Activated CD4-positive, alpha-beta T cell treated with anti-CD3 and anti-CD28 coated beads for 36 hours (primary cell): ENCODE measurements at regions of chr10 and their contacts with region 1.

Region 1: DNA sequence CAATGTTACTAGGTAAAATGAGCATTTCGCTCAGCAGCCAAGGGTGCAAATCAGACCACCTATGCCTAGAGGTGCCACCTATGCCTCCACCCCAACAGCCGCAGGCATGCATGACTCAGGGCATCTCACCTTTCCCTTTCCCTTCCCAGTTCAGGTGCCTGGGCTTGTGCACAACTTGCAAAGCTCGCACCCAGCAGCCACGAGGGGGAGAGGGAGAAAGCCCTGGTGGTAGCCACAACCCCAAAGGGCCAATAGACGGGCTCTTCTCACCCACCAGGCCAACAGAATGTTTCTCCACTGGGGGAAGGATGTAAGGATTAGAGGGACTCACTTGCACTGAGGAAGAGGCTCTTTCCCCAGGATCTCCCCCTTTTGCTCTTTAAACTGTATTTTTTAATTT is 462.3 kb upstream of the PCDH15 start:
- DNase-seq: no peak
- ATAC-seq: no peak
- H3K4me3 Mint-ChIP-seq: no peak overlapping the region
- H3K27ac Mint-ChIP-seq: no peak overlapping the region
- H3K4me1 Mint-ChIP-seq: no peaks in the 10 kb centered on the region
- H3K27me3 Mint-ChIP-seq: no peaks in the 10 kb centered on the region

Region 2: DNA sequence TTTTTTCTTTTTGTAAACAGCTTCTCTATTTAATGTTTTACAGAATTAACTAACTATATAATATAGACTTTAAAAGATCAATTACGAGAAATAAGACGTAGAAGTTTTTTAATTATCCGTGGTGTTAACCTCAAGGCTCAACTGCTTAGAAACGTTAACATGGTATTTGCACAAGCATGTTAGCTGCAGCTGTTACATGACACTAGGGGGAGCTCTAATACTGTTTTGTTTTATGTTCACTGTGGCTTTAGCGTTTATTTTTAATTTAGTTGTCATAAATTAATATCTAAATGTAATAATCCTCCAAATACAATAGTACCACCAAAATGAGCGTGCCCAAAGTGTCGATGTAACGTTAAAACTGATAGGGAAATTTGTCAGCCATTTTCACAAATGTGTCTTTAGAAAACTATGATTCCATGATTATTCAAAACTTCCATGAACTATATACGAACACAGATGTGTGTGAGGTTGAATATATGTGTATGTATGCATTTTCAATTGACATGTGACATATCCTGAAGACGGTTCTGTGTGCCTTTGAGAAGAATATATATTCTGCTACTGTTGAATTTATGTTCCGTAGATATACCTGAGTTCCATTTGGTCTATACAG is 1662.0 kb before region 1 on chr10:
- CTCF ChIA-PET with region 1: no interaction called
- POLR2A ChIA-PET with region 1: no interaction called
- intact Hi-C with region 1: loop called in 1 of 2 experiments (anchors 5 kb)
- DNase-seq: no peak
- ATAC-seq: no peak
- H3K4me3 Mint-ChIP-seq: no peak overlapping the region
- H3K27ac Mint-ChIP-seq: no peak overlapping the region
- H3K4me1 Mint-ChIP-seq: no peaks in the 10 kb centered on the region
- H3K27me3 Mint-ChIP-seq: no peaks in the 10 kb centered on the region

Region 3: GRCh38 chr10:53839440-53840039 is 1423.8 kb before region 1 on chr10:
- CTCF ChIA-PET with region 1: no interaction called
- POLR2A ChIA-PET with region 1: no interaction called
- intact Hi-C with region 1: loop called in 1 of 2 experiments (anchors 5 kb)
- DNase-seq: no peak
- ATAC-seq: no peak
- H3K4me3 Mint-ChIP-seq: no peak overlapping the region
- H3K27ac Mint-ChIP-seq: no peak overlapping the region
- H3K4me1 Mint-ChIP-seq: no peaks in the 10 kb centered on the region
- H3K27me3 Mint-ChIP-seq: no peaks in the 10 kb centered on the region

Region 4: DNA sequence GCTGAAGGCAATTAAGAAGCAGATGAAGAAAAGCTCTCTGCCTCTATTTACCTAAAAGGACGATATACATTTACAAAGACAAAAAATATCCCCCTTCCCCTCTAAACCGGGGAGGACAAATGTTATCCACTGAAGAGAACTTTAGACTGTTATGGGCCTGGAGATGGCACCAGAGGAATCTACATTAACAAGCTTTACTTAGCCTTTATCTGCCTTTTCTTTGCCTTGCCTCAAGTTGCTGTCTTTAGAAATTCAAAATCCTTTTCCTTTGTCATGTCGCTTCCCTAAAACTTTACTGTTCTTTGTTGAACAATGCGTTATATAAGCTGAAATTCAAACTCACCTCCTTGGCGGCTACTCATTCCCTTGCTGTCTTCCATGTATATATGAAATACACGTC is 867.3 kb before region 1 on chr10:
- CTCF ChIA-PET with region 1: no interaction called
- POLR2A ChIA-PET with region 1: no interaction called
- intact Hi-C with region 1: no loop called
- DNase-seq: no peak
- ATAC-seq: no peak
- H3K4me3 Mint-ChIP-seq: no peak overlapping the region
- H3K27ac Mint-ChIP-seq: no peak overlapping the region
- H3K4me1 Mint-ChIP-seq: no peaks in the 10 kb centered on the region
- H3K27me3 Mint-ChIP-seq: no peaks in the 10 kb centered on the region

Region 5: GRCh38 chr10:55091691-55092328 is 171.5 kb before region 1 on chr10:
- CTCF ChIA-PET with region 1: no interaction called
- POLR2A ChIA-PET with region 1: no interaction called
- intact Hi-C with region 1: loop called in 1 of 2 experiments (anchors 2 kb)
- DNase-seq: no peak
- ATAC-seq: no peak
- H3K4me3 Mint-ChIP-seq: no peak overlapping the region
- H3K27ac Mint-ChIP-seq: no peak overlapping the region
- H3K4me1 Mint-ChIP-seq: no peaks in the 10 kb centered on the region
- H3K27me3 Mint-ChIP-seq: no peaks in the 10 kb centered on the region

Region 6: DNA sequence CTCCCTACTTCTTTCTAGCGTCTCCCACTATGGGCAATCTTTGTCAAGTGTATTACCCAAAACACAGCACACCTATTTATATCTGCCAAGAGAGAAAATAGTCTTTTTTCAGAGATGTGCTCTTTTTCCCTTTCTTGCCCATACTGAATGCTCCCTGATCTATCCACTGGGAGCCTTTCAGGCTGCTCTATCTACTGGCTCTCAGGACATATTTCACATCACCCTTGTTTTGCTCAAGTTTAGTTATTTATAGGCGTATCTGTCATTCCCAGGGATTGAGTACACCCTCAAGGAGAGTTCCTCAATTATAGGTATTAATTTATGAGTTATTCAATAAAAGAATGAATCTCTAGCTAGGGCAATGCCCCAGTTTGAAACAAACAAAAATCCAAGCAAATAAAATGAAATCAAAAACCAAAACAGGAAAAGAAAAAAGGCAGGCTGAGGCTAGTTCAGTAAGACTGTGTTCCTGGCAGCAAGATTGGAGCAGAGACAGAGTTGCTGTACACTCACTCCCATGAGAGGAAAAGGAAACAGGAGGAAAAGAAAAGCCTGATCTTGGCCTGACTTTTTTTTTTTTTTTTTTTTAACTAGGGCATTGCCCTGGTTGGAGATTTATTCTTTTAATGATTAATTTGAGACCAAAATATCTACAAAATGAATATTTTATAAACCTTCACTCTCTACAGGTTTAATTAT is 203.6 kb after region 1 on chr10:
- CTCF ChIA-PET with region 1: no interaction called
- POLR2A ChIA-PET with region 1: no interaction called
- intact Hi-C with region 1: no loop called
- DNase-seq: no peak
- ATAC-seq: no peak
- H3K4me3 Mint-ChIP-seq: no peak overlapping the region
- H3K27ac Mint-ChIP-seq: no peak overlapping the region
- H3K4me1 Mint-ChIP-seq: no peaks in the 10 kb centered on the region
- H3K27me3 Mint-ChIP-seq: no peaks in the 10 kb centered on the region